Dorsolateral prefrontal cortex (tissue), 120 donors: ENCODE measurements at regions of chr1 and their contacts with region 1.

Region 1: GRCh38 chr1:171741872-171742576 is at the start of gene VAMP4:
- DNase-seq: peak; percentile 76 to 93 (median 84)
- H3K4me3 ChIP-seq: peak within 1 kb of the TSS; percentile 59 to 100 (median 88)
- H3K27ac ChIP-seq: peak within 1 kb of the TSS; percentile 78 to 98 (median 95)
- H3K27me3 ChIP-seq: no peaks in the 10 kb centered on the region
- CTCF ChIP-seq: peak in 26 of 56 donors; percentile 0 to 55 (median 24)
- total RNA-seq, gene VAMP4: 21.0 to 40.2 (median 29.5) TPM

Region 2: DNA sequence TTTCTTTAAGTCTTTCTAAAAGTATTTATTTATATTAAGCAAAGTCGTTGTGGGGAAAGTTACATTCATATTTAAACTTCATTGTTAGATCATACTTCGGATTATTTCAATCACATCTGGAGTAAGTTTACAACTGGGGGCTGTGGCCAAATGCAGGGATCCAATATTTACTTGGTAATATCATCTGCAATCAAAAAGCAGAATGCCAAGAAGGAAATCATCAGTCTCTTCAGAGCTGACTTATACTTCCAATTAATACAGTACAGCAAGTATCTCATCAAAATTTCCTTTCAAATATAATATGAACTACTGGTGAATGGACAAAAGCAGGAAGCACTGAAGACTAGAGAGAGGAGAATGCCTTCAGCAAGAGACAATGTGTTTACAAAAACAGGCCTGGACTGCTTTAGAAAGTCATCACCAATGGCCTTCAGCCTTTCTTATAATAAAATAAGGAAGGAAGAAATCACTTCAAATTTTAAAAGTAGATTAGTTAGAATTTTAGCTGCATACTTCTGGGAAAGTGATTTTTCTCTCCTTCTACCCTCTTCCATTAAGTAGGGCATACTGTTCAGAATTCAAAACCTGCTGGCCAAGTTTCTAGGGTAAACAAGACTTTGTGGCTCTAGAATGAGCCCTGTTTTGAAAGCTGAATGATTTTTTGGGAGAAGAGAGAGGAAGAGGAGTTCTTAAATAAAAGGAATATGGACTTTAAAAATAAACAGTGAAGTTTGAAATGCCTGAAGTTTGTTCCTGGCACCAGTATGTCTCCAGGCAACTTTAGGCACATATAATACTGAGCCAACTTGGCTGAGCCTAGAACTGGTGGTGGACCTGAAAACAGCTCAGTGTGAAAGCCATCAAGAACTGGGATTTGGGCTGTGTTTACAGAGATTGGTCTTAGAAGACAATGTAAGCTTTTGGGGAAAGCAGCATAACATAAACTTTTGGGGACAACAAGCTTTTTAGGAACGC is 67.3 kb before region 1 on chr1:
- intact Hi-C with region 1: no loop called
- DNase-seq: no peak
- H3K4me3 ChIP-seq: no peak overlapping the region
- H3K27ac ChIP-seq: peak overlapping the region in 3 of 59 donors; percentile 21 to 30 (median 26)
- H3K27me3 ChIP-seq: no peaks in the 10 kb centered on the region
- CTCF ChIP-seq: no peak

Region 3: DNA sequence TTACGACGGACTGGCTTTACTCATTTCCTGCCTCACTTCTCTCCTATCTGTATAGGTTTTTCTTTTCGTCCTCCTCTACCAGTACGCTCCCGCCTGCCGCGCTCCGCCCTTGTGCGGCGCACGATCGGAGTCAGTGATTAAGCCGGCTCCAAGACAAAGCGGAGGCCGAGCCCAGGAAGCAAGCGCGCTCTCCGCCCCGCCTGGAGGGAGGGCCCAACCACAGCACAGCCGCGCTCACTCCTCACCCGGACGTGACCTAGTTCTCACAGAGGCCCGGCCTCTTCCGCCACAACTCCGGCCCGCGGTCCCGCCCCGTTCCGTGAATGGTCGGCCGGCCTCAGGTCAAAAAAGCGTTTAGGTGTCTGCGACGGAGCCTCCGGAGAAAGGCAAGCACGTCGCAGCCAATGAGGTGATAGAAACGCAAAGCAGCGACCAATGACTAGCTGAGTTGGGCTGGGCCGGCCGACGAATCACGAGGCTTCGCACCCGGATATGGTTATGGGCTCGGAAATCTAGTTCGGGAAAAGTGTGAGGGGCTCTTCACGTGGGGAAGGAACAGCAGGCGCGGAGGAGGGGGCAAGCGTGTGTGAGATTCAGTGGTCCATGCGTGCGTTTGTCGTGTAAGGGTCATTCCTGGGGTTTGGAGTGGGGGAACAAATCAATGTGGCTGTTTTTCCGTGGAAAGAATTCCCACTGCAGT is 39.3 kb after region 1 on chr1 and contains the start of gene METTL13:
- intact Hi-C with region 1: loop called (anchors 1 to 2 kb)
- DNase-seq: peak; percentile 96 to 99 (median 99)
- H3K4me3 ChIP-seq: peak within 1 kb of the TSS; percentile 43 to 94 (median 82)
- H3K27ac ChIP-seq: peak within 1 kb of the TSS in 58 of 59 donors; percentile 6 to 97 (median 90)
- H3K27me3 ChIP-seq: no peaks in the 10 kb centered on the region
- CTCF ChIP-seq: peak in 41 of 56 donors; percentile 7 to 63 (median 31)
- total RNA-seq, gene METTL13: 17.7 to 35.2 (median 25.0) TPM